Heart right ventricle (tissue), 16 donors: ENCODE measurements at regions of chr6 and their contacts with region 1.

Region 1: DNA sequence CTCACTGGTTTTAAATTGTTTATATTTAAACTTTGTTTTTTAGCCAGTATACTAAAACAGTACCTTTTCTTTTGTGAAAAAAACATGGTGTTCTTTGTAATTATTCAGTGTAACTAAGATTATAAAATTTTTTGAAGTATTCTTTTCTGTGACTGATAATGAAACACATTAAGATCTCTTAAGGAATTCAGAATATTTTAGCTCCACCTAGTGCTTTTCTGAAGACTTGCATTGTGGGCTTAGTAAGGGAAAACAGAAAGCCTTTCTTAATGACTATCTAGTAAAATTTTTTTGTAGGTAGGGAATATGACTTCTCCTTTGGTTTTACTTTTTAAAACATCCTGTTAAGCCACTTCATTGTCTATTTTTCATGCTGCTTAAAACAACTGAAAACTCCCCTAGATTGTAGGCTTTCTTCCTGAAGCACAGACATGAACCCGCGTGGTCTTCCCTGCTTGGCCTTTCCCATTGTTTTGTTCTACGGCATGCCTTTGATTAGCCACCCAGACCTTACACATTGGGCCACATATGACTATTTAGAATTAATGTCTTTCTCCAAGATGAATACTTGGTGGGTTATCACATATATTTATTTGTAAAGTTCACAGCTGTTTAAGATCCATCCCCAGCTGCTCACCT is 72.1 kb downstream of the AFDN start:
- DNase-seq: no peak
- ATAC-seq: peak in 5 of 8 donors; percentile 29 to 53 (median 47)
- H3K4me3 ChIP-seq: no peak overlapping the region
- H3K27ac ChIP-seq: no peak overlapping the region
- H3K4me1 ChIP-seq: peaks cover 0 to 8% (median 0%) of the 10 kb centered on the region in 9 donors
- H3K27me3 ChIP-seq: no peaks in the 10 kb centered on the region
- CTCF ChIP-seq: peak; percentile 52 to 91 (median 79)

Region 2: GRCh38 chr6:167212713-167213005 is 686.1 kb before region 1 on chr6:
- intact Hi-C with region 1: loop called in 3 of 10 experiments (anchors 10 kb)
- DNase-seq: no peak
- ATAC-seq: no peak
- H3K4me3 ChIP-seq: no peak overlapping the region
- H3K27ac ChIP-seq: no peak overlapping the region
- H3K4me1 ChIP-seq: no peaks in the 10 kb centered on the region
- H3K27me3 ChIP-seq: peaks cover 0 to 21% (median 5%) of the 10 kb centered on the region in 7 donors
- CTCF ChIP-seq: no peak

Region 3: DNA sequence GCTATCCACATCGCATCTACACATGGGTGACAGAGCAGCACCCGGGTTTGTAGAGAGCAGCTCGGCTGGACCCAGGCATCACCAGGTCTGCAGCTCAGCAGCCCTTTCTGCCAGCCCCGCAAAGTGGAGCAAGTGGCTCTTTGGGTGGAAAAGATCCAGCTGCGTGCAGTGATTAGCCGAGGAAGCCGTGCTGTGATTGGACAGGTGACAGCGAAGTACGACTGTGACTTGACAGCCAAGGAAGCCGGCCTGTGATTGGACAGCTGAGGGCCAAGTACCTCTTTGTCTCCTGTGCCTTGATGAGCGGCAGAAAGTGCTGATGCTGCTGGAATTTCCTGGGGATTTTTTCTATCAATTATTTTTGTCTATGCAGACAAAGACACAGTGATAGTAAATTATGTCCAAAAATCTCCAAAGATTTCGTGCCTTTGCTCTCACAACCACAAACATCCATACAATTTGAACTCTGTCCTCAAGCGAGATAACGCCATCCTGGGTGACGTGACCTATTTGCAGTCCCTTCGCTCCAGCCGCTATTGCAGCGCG is 678.8 kb before region 1 on chr6:
- intact Hi-C with region 1: loop called in 4 of 10 experiments (anchors 10 kb)
- DNase-seq: no peak
- ATAC-seq: no peak
- H3K4me3 ChIP-seq: no peak overlapping the region
- H3K27ac ChIP-seq: no peak overlapping the region
- H3K4me1 ChIP-seq: no peaks in the 10 kb centered on the region
- H3K27me3 ChIP-seq: peaks cover 0 to 8% (median 0%) of the 10 kb centered on the region in 7 donors
- CTCF ChIP-seq: no peak

Region 4: DNA sequence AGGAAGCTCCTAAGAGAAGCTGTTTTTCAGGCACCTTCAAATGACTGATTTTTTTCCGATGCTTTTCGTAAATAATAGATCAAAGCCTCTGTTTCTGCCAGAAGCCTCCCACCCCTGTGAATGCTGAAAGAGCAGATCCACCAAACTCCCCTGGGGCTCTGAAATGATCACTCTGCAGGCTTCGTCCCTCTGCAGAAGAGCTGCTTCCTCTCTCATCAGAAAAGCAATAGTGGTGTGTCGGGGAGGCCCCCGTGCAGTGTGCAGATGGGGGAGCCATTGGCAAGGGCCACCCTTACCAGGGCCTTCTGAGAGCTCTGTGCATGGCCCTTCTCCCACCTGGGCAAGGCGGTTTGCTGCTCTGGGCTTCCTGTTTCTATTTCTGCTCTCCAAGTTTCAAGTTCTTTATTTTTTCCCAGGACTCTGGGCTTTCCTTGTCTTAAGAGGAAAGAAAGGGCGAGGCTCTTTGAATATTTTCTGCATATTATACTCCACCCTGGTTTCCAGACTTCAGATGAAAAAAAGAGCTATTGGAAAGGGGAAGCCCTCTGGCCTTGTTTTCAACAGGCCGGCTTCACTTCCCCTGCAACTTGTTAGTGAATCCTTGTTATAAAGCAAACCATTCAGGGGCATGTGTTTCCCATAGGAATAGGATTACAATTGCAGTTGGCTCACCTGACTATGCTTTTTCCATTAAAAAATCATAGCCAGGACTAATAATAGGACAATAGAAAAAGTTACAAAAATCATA is 418.7 kb before region 1 on chr6:
- intact Hi-C with region 1: loop called in 9 of 10 experiments (anchors 1 to 5 kb)
- DNase-seq: peak in 1 of 2 donors; percentile 49
- ATAC-seq: peak; percentile 28 to 88 (median 78)
- H3K4me3 ChIP-seq: peak overlapping the region in 2 of 10 donors; percentile 8 to 26
- H3K27ac ChIP-seq: peak overlapping the region in 7 of 10 donors; percentile 38 to 74 (median 53)
- H3K4me1 ChIP-seq: peaks cover 0 to 34% (median 16%) of the 10 kb centered on the region in 9 donors
- H3K27me3 ChIP-seq: peaks cover 0 to 12% (median 0%) of the 10 kb centered on the region in 7 donors
- CTCF ChIP-seq: no peak

Region 5: GRCh38 chr6:167485186-167485978 is 413.4 kb before region 1 on chr6:
- intact Hi-C with region 1: loop called in 9 of 10 experiments (anchors 1 to 5 kb)
- DNase-seq: peak in 1 of 2 donors; percentile 65
- ATAC-seq: peak in 7 of 8 donors; percentile 77 to 87 (median 84)
- H3K4me3 ChIP-seq: no peak overlapping the region
- H3K27ac ChIP-seq: no peak overlapping the region
- H3K4me1 ChIP-seq: peaks cover 0 to 19% (median 5%) of the 10 kb centered on the region in 9 donors
- H3K27me3 ChIP-seq: no peaks in the 10 kb centered on the region
- CTCF ChIP-seq: peak in 8 of 9 donors; percentile 50 to 80 (median 68)

Region 6: DNA sequence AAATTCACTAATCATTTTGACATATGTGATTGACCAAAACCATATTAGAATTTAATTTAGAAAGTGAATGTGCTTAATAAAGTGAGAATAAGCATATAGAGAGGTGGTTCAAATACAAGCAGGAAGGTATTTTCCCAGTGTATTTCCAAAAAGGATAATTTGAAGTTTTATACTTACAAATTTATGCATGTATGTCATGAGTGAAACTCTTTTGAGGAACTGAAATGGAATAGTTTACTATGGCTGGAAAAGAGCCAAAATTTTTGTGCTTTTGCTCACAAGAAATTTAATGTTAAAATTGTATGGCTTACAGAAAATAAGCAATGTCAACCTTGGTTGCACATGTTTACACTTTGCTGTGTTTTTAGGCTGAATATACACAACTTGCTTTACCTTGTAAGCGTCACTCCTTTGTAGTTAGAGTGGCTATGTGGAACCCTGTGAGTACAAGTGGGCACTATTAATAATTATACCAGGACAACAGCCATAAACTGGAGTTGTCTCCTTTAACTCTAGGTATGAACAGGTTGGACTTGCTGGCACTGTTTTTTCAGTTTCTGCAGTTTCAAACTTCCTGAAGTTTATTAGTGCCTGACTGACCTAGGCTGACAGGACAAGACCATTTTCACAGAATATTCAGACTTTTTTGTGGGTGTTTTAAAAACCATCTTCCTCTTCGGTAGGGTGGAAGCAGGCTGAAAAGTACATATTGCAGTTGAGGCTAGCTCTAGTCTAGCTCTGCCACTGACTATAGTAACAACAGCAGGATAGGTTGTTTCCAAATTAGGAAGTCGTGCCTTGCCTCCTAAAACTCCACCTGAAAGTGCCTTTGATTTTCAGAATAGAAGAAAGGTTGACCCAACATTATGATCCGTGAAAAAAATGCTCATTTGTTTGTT is 66.0 kb before region 1 on chr6:
- intact Hi-C with region 1: loop called in 2 of 10 experiments (anchors 5 to 10 kb)
- DNase-seq: no peak
- ATAC-seq: peak in 5 of 8 donors; percentile 11 to 57 (median 52)
- H3K4me3 ChIP-seq: no peak overlapping the region
- H3K27ac ChIP-seq: peak overlapping the region in 2 of 10 donors; percentile 11 to 14
- H3K4me1 ChIP-seq: peaks cover 0 to 77% (median 53%) of the 10 kb centered on the region in 9 donors
- H3K27me3 ChIP-seq: peaks cover 0 to 24% (median 0%) of the 10 kb centered on the region in 7 donors
- CTCF ChIP-seq: no peak

Region 7: GRCh38 chr6:168326294-168327261 is 427.8 kb after region 1 on chr6:
- intact Hi-C with region 1: no loop called
- DNase-seq: no peak
- ATAC-seq: peak in 7 of 8 donors; percentile 41 to 91 (median 73)
- H3K4me3 ChIP-seq: no peak overlapping the region
- H3K27ac ChIP-seq: peak overlapping the region in 7 of 10 donors; percentile 7 to 67 (median 35)
- H3K4me1 ChIP-seq: no peaks in the 10 kb centered on the region
- H3K27me3 ChIP-seq: peaks cover 0 to 71% (median 51%) of the 10 kb centered on the region in 7 donors
- CTCF ChIP-seq: no peak